ENCODE measurements at regions of chr3 and their contacts with region 1.

Region 1: GRCh38 chr3:159804726-159805410 is 183.8 kb upstream of the IL12A start:
- DNase-seq: peak in 1 of 2 donors; percentile 87
- H3K4me3 ChIP-seq: peak overlapping the region in 1 of 2 donors; percentile 26
- H3K27ac ChIP-seq: peak overlapping the region; percentile 59 to 73
- H3K4me1 ChIP-seq: peaks cover 3 to 40% of the 10 kb centered on the region in 2 donors
- H3K27me3 ChIP-seq: no peaks in the 10 kb centered on the region
- CTCF ChIP-seq: peak; percentile 79 to 87 (median 85)

Region 2: GRCh38 chr3:159260049-159260662 is 544.7 kb before region 1 on chr3:
- intact Hi-C with region 1: loop called (anchors 10 kb)
- DNase-seq: no peak
- H3K4me3 ChIP-seq: no peak overlapping the region
- H3K27ac ChIP-seq: no peak overlapping the region
- H3K4me1 ChIP-seq: no peaks in the 10 kb centered on the region
- H3K27me3 ChIP-seq: no peaks in the 10 kb centered on the region
- CTCF ChIP-seq: peak; percentile 40 to 61 (median 59)

Region 3: DNA sequence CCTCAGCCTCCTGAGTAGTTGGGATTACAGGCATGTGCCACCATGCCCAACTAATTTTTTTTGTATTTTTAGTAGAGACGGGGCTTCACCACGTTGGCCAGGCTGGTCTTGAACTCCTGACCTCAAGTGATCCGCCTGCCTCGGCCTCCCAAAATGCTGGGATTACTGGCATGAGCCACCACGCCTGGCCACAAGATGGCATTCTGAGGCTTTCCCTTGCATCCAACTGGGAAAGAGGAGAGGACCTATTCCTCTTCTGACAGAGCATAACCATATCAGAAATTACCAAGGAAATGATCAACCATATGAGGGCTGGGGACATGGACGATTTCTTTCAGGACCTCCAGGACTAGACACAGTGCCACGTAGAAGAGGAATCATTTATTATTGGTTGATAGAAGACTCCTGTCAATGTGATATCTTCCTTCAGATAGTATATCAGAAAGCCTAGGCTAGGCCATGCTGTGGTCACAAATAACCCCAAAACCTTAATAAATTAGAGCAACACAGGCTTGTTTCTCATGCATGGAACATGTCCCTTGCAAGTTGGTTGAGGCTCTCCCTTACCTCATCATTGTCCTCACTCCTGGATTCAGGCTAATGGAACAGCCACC is 188.5 kb before region 1 on chr3:
- intact Hi-C with region 1: loop called (anchors 1 kb)
- DNase-seq: no peak
- H3K4me3 ChIP-seq: no peak overlapping the region
- H3K27ac ChIP-seq: no peak overlapping the region
- H3K4me1 ChIP-seq: no peaks in the 10 kb centered on the region
- H3K27me3 ChIP-seq: no peaks in the 10 kb centered on the region
- CTCF ChIP-seq: peak; percentile 35 to 69 (median 46)

Measured in ascending aorta (tissue), 2 donors.